ENCODE measurements at regions of chr1 and their contacts with region 1.

Region 1: GRCh38 chr1:165403835-165404482 is 41.0 kb downstream of the RXRG start:
- DNase-seq: no peak

Region 2: GRCh38 chr1:165467706-165468105 is 63.7 kb after region 1 on chr1:
- intact Hi-C with region 1: loop called in 1 of 2 experiments (anchors 2 kb)
- DNase-seq: no peak

Region 3: DNA sequence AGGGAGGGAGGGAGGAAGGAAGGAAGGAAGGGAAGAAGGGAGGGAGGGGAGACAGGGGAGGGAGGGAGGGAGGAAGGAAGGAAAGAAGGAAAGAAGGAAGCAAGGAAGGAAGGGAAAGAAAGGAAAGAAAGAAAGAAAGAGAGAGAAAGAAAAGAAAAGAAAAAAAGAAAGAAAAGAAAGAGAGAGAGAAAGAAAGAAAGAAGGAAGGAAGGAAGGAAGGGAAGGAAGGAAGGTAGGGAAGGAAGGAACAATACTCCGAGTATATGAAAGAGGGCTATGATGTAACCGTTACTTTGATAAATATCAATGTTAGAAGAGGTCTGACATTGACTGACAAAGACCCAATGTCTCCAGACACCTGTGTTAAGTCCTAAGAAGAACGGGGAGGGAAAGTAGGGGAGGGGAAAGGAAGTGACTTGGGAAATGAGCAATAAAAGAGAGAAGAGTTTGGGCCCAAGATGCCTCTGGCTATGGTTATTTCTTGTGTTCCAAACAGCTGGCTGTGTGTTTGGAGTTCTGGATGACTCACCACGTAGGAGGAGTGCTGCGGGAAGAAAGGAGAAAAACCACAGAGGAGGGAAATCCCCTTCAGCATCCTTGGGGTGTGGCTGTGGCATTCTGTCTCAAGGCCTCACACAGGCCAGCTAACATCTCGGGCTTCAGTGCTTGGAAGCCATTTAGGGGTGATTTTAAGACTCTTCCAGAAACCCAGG is 78.0 kb after region 1 on chr1:
- intact Hi-C with region 1: loop called in 1 of 2 experiments (anchors 2 kb)
- DNase-seq: no peak

Region 4: DNA sequence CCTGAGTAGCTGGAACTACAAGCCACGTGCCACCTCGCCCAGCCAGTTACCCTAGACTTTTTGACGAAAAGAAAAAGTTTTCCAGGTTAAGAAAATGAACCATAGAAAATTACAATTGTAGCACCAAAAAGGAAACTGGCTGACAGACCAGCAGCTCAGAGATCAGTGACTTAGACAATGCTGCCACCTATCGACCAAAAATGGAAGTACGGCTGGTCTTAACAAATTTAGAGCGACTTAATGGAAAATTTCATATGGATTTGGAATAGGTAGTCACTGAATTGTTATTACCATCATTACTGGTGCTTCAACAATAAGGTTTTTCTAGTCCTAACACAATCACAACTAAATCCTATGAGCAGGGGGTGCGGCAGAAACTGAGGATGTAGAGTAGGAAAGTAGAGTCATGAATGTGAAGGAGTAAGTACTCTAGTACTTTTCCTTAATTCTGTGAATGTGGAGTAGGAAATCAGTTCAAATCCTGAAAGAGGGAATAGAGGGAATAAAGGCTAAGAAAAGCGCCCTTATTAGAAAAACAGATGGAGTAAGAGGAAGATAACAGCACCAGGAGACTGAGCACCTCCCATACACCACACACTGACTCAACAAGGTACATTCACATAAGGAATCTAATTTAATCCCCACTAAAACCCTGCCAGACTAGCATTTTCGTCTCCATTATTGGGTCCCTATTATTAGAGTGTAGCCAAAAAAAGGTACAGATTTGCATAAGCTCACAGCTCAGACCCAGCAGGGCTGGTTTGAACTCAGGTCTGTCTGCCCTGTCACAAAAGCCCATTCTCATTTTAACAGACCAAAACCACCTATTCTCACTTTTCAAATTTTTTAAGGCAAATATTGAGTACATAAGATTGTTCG is 189.2 kb after region 1 on chr1:
- intact Hi-C with region 1: loop called in 1 of 2 experiments (anchors 5 kb)
- DNase-seq: no peak

Measured in posterior vena cava (tissue), 2 donors.